Cardiac septum (tissue), 1 donor: ENCODE measurements at regions of chr12 and their contacts with region 1.

Region 1: GRCh38 chr12:6778574-6779550 is 6.5 kb downstream of the LAG3 start:
- DNase-seq: peak; percentile 96

Region 2: GRCh38 chr12:6735448-6736191 is 43.2 kb before region 1 on chr12:
- intact Hi-C with region 1: loop called (anchors 1 kb)
- DNase-seq: peak; percentile 83

Region 3: DNA sequence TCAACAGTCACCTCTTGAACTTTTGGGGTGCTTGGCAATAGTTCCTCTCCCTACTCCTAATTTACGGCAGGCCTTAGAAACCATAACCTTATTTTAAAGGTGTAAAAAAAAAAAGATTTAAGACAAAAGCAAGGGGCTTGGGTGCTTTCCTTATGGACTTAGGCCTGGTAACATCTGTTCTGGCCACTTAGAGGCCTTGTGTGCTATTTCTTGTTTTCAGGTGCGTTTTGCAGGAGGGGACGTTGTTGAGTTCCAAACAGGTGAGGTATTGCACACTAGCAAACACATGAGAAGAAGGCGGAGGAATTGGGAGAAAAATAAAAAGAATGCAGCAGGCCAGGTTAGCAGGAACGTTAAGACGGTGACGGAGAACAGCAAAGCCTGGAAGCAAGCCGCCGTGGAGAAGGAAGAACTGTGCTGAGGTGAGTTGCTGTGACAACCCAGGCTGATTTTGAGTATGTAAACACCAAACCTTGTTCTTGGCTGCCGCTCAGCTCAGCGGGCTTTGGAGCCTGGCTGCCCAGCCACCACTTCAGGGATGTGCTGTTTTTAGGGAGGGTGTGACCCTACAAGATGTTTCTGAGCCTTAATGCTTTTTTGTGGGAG is 209.2 kb after region 1 on chr12:
- intact Hi-C with region 1: no loop called
- DNase-seq: no peak